Colonic mucosa (tissue), 4 donors: ENCODE measurements at regions of chr13 and their contacts with region 1.

Region 1: DNA sequence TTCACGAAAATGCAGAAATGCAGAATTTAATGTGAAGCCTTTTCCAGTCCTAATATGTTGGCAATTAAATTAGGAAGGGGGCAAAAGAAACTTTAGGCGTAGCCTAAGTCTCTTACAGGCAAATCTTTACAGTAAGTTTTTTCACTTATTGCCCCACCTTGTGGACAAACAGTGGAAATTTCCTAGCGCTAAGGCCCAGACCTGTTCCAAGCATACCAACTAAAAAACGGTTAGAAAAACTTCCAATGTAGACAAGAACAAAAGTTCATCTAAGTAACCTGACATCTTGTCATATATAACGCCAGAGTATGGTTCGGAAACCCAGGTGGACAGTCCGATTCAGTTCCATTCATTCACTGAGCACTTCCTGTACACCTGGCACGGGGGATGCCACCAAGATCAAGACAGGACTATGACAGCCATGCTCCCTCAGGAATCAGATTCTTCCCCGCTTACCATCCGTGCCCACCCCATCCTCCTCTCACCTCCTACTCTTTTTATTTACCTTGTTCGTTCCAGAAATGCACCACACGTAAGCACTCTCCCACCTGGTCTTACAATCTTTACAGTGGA is 4.9 kb downstream of the ZAR1L start:
- DNase-seq: peak; percentile 30
- H3K4me3 ChIP-seq: no peak overlapping the region
- H3K27ac ChIP-seq: no peak overlapping the region
- H3K4me1 ChIP-seq: no peaks in the 10 kb centered on the region
- H3K27me3 ChIP-seq: no peaks in the 10 kb centered on the region
- CTCF ChIP-seq: peak; percentile 70

Region 2: DNA sequence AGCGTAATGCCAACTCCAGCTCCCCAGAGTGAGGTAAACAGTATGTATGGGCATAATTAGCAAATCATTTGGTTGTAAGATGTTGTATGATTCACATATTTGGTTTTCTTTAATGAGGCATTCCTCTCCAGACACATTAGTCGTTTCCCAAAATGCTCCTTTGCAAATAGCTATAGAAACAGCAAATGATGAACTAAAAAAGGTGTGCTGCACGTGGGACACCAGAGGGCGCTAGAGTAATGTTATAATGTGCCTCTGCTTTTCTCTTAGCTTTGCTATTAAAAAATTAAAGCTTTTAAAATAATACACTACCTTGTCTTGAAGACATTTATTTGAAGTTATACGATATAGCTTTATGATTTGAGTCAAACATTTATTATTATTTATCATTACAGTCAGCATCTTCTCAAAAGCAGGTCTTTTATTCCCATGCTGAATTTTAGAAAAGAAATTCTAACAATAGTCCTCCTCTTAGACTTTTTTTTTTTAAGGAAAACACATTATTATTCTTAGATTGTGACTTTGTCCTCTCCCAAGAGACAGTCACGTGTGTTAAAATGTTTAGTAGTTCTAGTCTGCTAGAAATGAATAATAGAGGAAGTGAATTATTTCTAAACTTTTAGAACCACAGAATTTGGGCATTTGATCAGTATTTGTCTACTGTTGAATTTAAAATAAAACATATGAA is 400.2 kb before region 1 on chr13:
- intact Hi-C with region 1: loop called (anchors 5 kb)
- DNase-seq: peak; percentile 62
- H3K4me3 ChIP-seq: no peak overlapping the region
- H3K27ac ChIP-seq: no peak overlapping the region
- H3K4me1 ChIP-seq: no peaks in the 10 kb centered on the region
- H3K27me3 ChIP-seq: no peaks in the 10 kb centered on the region
- CTCF ChIP-seq: peak; percentile 79

Region 3: GRCh38 chr13:32063619-32064233 is 246.5 kb before region 1 on chr13:
- intact Hi-C with region 1: no loop called
- DNase-seq: no peak
- H3K4me3 ChIP-seq: no peak overlapping the region
- H3K27ac ChIP-seq: no peak overlapping the region
- H3K4me1 ChIP-seq: no peaks in the 10 kb centered on the region
- H3K27me3 ChIP-seq: no peaks in the 10 kb centered on the region
- CTCF ChIP-seq: no peak

Region 4: DNA sequence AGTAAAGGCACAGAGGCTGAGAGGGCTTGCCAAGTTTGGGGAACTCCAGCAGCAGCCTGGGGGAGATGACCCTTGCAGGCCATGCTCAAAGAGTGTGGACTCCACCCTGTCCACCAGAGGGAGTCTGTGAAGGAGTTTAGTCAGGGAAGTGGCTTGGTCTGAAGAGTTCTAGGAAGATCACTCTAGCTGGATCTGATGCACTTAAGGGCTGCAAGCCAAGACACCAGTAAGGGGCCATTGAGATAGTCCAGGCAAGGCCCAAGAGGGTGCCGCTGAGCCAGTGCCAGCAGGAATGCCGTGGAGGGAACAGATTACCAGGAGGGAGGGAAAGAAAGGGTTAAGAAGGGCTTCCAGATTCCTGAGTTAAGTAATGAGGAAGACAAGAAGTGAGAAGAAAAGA is 63.8 kb before region 1 on chr13:
- intact Hi-C with region 1: loop called (anchors 5 kb)
- DNase-seq: peak; percentile 63
- H3K4me3 ChIP-seq: no peak overlapping the region
- H3K27ac ChIP-seq: no peak overlapping the region
- H3K4me1 ChIP-seq: no peaks in the 10 kb centered on the region
- H3K27me3 ChIP-seq: no peaks in the 10 kb centered on the region
- CTCF ChIP-seq: peak; percentile 51